Activated naive CD8-positive, alpha-beta T cell treated with anti-CD3 and anti-CD28 coated beads, Interleukin-2, amount 10 ng/mL, durations not matched to agents 7 days and 5 days (primary cell): ENCODE measurements at regions of chr12 and their contacts with region 1.

Region 1: GRCh38 chr12:47812797-47813510 is 6.7 kb downstream of the HDAC7 start:
- DNase-seq: peak; percentile 87
- ATAC-seq: peak; percentile 69
- H3K4me3 Mint-ChIP-seq: peak overlapping the region; percentile 91
- H3K27ac Mint-ChIP-seq: peak overlapping the region; percentile 98
- H3K4me1 Mint-ChIP-seq: peaks cover 70% of the 10 kb centered on the region
- H3K27me3 Mint-ChIP-seq: no peaks in the 10 kb centered on the region

Region 2: GRCh38 chr12:47767216-47767724 is 45.7 kb before region 1 on chr12:
- POLR2A ChIA-PET with region 1: interaction called, 13 read pairs
- DNase-seq: peak; percentile 78
- ATAC-seq: peak; percentile 71
- H3K4me3 Mint-ChIP-seq: peak overlapping the region; percentile 65
- H3K27ac Mint-ChIP-seq: no peak overlapping the region
- H3K4me1 Mint-ChIP-seq: peaks cover 27% of the 10 kb centered on the region
- H3K27me3 Mint-ChIP-seq: peaks cover 10% of the 10 kb centered on the region

Region 3: GRCh38 chr12:47779301-47779942 is 33.5 kb before region 1 on chr12:
- POLR2A ChIA-PET with region 1: interaction called, 12 read pairs
- DNase-seq: peak; percentile 96
- ATAC-seq: peak; percentile 81
- H3K4me3 Mint-ChIP-seq: no peak overlapping the region
- H3K27ac Mint-ChIP-seq: peak overlapping the region; percentile 59
- H3K4me1 Mint-ChIP-seq: peaks cover 30% of the 10 kb centered on the region
- H3K27me3 Mint-ChIP-seq: no peaks in the 10 kb centered on the region

Region 4: GRCh38 chr12:47797441-47797840 is 15.5 kb before region 1 on chr12:
- POLR2A ChIA-PET with region 1: interaction called, 428 read pairs
- DNase-seq: peak; percentile 61
- ATAC-seq: peak; percentile 71
- H3K4me3 Mint-ChIP-seq: no peak overlapping the region
- H3K27ac Mint-ChIP-seq: peak overlapping the region; percentile 88
- H3K4me1 Mint-ChIP-seq: peaks cover 36% of the 10 kb centered on the region
- H3K27me3 Mint-ChIP-seq: no peaks in the 10 kb centered on the region

Region 5: GRCh38 chr12:47828608-47829536 is 15.9 kb after region 1 on chr12:
- POLR2A ChIA-PET with region 1: interaction called, 465 read pairs
- DNase-seq: no peak
- ATAC-seq: no peak
- H3K4me3 Mint-ChIP-seq: peak overlapping the region; percentile 23
- H3K27ac Mint-ChIP-seq: peak overlapping the region; percentile 82
- H3K4me1 Mint-ChIP-seq: peaks cover 72% of the 10 kb centered on the region
- H3K27me3 Mint-ChIP-seq: no peaks in the 10 kb centered on the region

Region 6: GRCh38 chr12:47837190-47838171 is 24.5 kb after region 1 on chr12:
- POLR2A ChIA-PET with region 1: interaction called, 465 read pairs
- DNase-seq: peak; percentile 74
- ATAC-seq: no peak
- H3K4me3 Mint-ChIP-seq: peak overlapping the region; percentile 35
- H3K27ac Mint-ChIP-seq: peak overlapping the region; percentile 62
- H3K4me1 Mint-ChIP-seq: peaks cover 53% of the 10 kb centered on the region
- H3K27me3 Mint-ChIP-seq: no peaks in the 10 kb centered on the region

Region 7: DNA sequence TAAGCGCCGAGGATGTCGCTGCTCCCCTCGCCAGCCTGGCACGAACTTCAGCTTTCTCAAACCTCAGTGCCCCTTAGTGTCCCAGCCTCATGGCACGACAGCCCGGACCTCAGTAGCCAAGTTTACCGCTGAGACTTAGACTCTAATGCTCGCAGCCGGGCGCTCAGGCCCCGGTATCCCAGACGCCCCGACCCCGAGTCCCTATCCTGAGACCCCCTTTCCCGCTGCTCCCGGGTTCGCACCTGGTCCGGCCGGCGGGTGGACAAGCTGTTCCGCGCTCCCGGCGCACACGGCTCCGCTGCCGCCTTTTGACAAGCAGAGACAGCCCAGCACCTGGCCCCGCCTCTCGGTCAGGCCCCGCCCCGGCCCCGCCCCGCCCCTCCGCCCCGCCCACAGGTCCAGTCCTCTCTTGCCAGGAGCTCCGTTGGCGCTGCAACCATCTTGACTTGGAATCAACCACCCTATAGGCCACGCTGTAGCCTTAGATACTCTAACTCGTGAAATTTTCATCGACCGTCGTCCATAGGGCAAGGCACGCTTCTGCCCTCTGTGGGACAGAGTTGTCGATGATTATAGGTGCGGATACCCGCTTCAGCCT is 91.9 kb after region 1 on chr12 and contains the start of gene VDR:
- POLR2A ChIA-PET with region 1: no interaction called
- DNase-seq: peak; percentile 78
- ATAC-seq: peak; percentile 63
- H3K4me3 Mint-ChIP-seq: peak within 1 kb of the TSS; percentile 91
- H3K27ac Mint-ChIP-seq: peak within 1 kb of the TSS; percentile 82
- H3K4me1 Mint-ChIP-seq: peaks cover 49% of the 10 kb centered on the region
- H3K27me3 Mint-ChIP-seq: peaks cover 38% of the 10 kb centered on the region
- total RNA-seq, gene VDR: 13.9 to 14.3 TPM

Region 8: DNA sequence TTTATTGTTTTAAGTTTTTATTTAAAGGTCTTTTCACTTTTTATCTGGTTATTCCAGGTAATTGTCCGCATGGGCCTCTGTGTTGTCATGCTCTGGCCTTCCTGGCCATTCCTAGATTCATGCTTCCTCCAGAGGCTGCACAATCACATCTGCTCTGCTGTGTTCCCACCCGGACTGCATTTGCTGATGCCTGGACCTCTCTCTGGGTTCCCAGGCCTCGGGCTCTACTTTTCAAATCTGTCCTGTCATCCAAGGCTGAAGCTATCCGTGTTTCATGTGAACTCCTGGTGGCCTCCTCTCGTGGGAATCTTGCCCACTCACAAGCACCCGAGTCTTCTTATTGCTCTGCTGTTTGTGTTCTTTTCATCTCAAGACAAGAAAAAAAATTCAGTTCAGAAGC is 108.0 kb after region 1 on chr12:
- POLR2A ChIA-PET with region 1: no interaction called
- DNase-seq: no peak
- ATAC-seq: no peak
- H3K4me3 Mint-ChIP-seq: no peak overlapping the region
- H3K27ac Mint-ChIP-seq: no peak overlapping the region
- H3K4me1 Mint-ChIP-seq: no peaks in the 10 kb centered on the region
- H3K27me3 Mint-ChIP-seq: peaks cover 46% of the 10 kb centered on the region